ENCODE measurements at regions of chr6 and their contacts with region 1.

Region 1: GRCh38 chr6:42166444-42167141 is 6.6 kb upstream of the GUCA1A start:
- DNase-seq: peak; percentile 63
- ATAC-seq: peak; percentile 93
- H3K4me3 ChIP-seq: no peak overlapping the region
- H3K27ac ChIP-seq: peak overlapping the region; percentile 31; the same call in 1 of the 2 replicates
- H3K4me1 ChIP-seq: peaks cover 3 to 13% of the 10 kb centered on the region in 2 experiments; a peak in 3 of 4 replicates
- H3K27me3 ChIP-seq: no peaks in the 10 kb centered on the region
- CTCF ChIP-seq: peak; percentile 90 to 98 (median 98)
- POLR2A ChIP-seq: no peak
- RAD21 ChIP-seq: peak; percentile 94

Region 2: GRCh38 chr6:41531591-41532582 is 634.7 kb before region 1 on chr6:
- CTCF ChIA-PET with region 1: no interaction called
- POLR2A ChIA-PET with region 1: no interaction called
- RAD21 ChIA-PET with region 1: no interaction called
- intact Hi-C with region 1: no loop called
- DNase-seq: no peak
- ATAC-seq: no peak
- H3K4me3 ChIP-seq: no peak overlapping the region
- H3K27ac ChIP-seq: no peak overlapping the region
- H3K4me1 ChIP-seq: peaks cover 24 to 35% of the 10 kb centered on the region in 2 experiments
- H3K27me3 ChIP-seq: no peaks in the 10 kb centered on the region
- CTCF ChIP-seq: no peak
- POLR2A ChIP-seq: no peak
- RAD21 ChIP-seq: no peak

Region 3: GRCh38 chr6:42084889-42085288 is 81.7 kb before region 1 on chr6:
- CTCF ChIA-PET with region 1: interaction called, 3 read pairs
- POLR2A ChIA-PET with region 1: no interaction called
- RAD21 ChIA-PET with region 1: no interaction called
- intact Hi-C with region 1: loop called (anchors 2 kb)
- DNase-seq: no peak
- ATAC-seq: no peak
- H3K4me3 ChIP-seq: no peak overlapping the region
- H3K27ac ChIP-seq: no peak overlapping the region
- H3K4me1 ChIP-seq: peaks cover 18 to 38% of the 10 kb centered on the region in 2 experiments
- H3K27me3 ChIP-seq: no peaks in the 10 kb centered on the region
- CTCF ChIP-seq: peak; percentile 21 to 45 (median 35); a peak in 4 of 6 replicates
- POLR2A ChIP-seq: no peak
- RAD21 ChIP-seq: peak; percentile 58

Region 4: GRCh38 chr6:42217519-42218367 is 51.1 kb after region 1 on chr6 and contains the start of gene MRPS10:
- CTCF ChIA-PET with region 1: interaction called, 3 read pairs
- POLR2A ChIA-PET with region 1: no interaction called
- RAD21 ChIA-PET with region 1: interaction called in 1 of 2 experiments, 4 read pairs
- intact Hi-C with region 1: loop called (anchors 1 kb)
- DNase-seq: peak; percentile 95
- ATAC-seq: peak; percentile 95
- H3K4me3 ChIP-seq: peak within 1 kb of the TSS; percentile 72 to 97
- H3K27ac ChIP-seq: peak within 1 kb of the TSS; percentile 68
- H3K4me1 ChIP-seq: peaks cover 8 to 59% of the 10 kb centered on the region in 2 experiments; a peak in 3 of 4 replicates
- H3K27me3 ChIP-seq: no peaks in the 10 kb centered on the region
- CTCF ChIP-seq: no peak
- POLR2A ChIP-seq: peak; percentile 71
- RAD21 ChIP-seq: peak; percentile 19; the same call in 1 of the 2 replicates
- total RNA-seq, gene MRPS10: 62.1 TPM

Region 5: DNA sequence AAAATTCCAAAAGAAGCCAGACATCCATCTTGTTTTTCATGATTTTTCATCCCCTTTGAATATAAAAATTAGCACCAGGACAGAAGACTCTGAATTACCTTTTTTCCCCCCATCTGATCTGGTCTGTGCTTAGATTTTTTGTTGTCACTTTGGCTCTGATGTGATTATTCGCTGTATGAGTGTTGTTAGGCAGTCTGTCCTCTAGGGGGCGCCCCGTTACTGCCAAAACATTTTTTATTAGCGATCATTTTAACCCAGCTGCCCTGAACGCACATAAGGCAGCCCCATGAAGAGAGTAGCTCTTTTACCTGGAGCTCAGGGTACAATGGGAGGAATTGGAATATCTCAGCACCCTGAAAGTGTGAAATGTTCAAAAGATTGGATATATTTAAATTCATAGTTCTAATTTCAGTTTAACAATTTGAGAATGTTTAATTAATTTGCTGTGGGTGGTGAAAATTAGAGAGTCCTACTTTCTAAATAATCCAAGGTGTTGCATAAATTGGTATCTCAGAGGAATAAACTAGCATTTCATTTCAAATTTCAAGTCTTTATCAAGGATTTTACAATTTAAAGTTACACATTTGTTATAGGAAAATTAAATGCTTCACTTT is 495.1 kb after region 1 on chr6:
- CTCF ChIA-PET with region 1: no interaction called
- POLR2A ChIA-PET with region 1: no interaction called
- RAD21 ChIA-PET with region 1: no interaction called
- intact Hi-C with region 1: no loop called
- DNase-seq: peak; percentile 50
- ATAC-seq: peak; percentile 88
- H3K4me3 ChIP-seq: no peak overlapping the region
- H3K27ac ChIP-seq: no peak overlapping the region
- H3K4me1 ChIP-seq: peaks cover 0 to 2% of the 10 kb centered on the region in 2 experiments; a peak in 2 of 4 replicates
- H3K27me3 ChIP-seq: no peaks in the 10 kb centered on the region
- CTCF ChIP-seq: peak; percentile 81 to 94 (median 87); a peak in 5 of 6 replicates
- POLR2A ChIP-seq: no peak
- RAD21 ChIP-seq: peak; percentile 92

Measured in HCT116 (cell line).